Activated B cell treated with CpG ODN at 0.5 μM for 24 hours (primary cell): ENCODE measurements at regions of chr1 and their contacts with region 1.

Region 1: GRCh38 chr1:219173758-219174588 is at the start of gene LYPLAL1:
- DNase-seq: peak; percentile 91
- ATAC-seq: peak; percentile 86
- H3K4me3 Mint-ChIP-seq: peak within 1 kb of the TSS; percentile 98
- H3K27ac Mint-ChIP-seq: peak within 1 kb of the TSS; percentile 98
- H3K4me1 Mint-ChIP-seq: peaks cover 55% of the 10 kb centered on the region
- H3K27me3 Mint-ChIP-seq: no peaks in the 10 kb centered on the region
- CTCF ChIP-seq: no peak
- total RNA-seq, gene LYPLAL1: 38.0 and 42.3 TPM in 2 replicates

Region 2: DNA sequence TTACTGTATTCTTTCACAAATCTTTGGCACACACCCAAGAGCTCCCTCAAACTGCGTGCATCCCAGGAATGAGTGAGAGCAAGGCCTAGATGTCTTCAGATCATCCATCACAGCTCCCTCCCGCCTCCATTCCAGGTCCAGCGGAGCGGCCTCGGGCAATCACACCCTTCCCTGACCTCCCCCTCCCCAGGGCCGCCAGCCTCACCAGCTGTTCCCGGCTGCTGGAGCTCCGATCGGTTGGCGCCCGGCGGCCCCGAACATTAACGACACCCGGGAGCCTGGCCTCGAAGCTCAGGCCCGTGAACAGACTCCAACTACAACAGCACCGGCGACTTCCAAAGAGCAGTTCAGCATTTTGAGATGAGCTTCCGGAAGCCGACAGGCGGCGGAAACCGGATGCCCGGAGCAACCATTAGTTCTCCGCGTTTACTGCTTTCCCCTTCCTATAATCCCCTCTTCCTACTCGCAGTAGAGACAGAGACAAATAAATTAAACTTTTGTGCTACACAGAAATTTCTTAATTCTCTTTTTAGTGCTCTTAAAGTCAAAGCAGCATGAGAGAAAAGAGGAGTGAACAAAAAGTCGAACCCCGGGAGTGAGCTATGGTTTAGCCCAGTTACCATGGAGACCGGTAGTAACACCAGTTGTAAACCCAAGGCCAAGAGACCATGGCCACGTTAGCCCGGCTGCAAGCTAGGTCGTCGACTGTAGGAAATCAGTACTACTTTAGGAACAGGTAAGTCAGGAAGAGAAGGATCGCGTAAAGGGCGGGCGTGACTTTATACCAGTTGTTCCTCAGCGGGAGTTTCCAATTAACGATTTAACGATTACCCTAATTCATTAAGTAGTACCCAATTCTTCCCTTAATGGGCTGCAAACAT is 1543.0 kb before region 1 on chr1 and contains the starts of genes GPATCH2 and SPATA17:
- CTCF ChIA-PET with region 1: no interaction called
- POLR2A ChIA-PET with region 1: interaction called, 3 read pairs
- intact Hi-C with region 1: loop called (anchors 5 kb)
- DNase-seq: peak; percentile 59
- ATAC-seq: peak; percentile 89
- H3K4me3 Mint-ChIP-seq: peak within 1 kb of the TSS; percentile 97
- H3K27ac Mint-ChIP-seq: peak within 1 kb of the TSS; percentile 100
- H3K4me1 Mint-ChIP-seq: peaks cover 28% of the 10 kb centered on the region
- H3K27me3 Mint-ChIP-seq: peaks cover 15% of the 10 kb centered on the region
- CTCF ChIP-seq: no peak
- total RNA-seq, gene GPATCH2: 13.5 and 17.5 TPM in 2 replicates
- total RNA-seq, gene SPATA17: not detected in 2 replicates

Region 3: DNA sequence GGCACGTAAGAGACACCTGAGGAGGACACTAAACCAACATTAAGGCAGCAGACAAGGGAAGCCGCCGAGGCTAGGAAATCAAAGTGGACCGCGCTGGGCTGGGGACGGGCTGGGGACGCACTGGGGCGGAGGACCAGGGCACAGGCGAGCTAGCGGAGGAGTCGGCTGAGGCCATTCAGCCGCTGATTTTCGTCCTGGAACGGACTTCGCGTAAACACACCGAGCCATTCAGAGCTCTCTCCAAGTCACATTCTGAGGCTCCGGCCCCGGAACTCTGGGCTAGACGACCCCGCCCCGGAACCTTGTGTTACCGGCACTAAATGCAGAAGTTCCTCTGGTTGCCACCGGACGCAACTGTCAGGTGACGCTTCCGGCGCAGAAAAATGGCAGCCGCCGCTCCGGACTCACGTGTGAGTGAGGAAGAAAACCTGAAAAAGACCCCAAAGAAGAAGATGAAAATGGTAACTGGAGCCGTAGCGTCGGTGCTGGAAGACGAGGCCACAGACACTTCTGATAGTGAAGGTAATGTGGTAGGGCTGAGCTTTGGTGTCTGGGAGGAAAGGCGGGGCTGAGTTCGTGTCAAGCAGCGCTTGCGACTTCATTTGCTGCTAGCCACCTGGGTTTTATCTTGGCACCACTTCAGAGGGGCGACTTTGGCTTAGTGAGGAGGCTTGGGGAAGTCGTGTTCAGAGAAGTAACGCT is 888.9 kb before region 1 on chr1 and contains the start of gene RRP15:
- CTCF ChIA-PET with region 1: no interaction called
- POLR2A ChIA-PET with region 1: interaction called, 8 read pairs
- intact Hi-C with region 1: loop called (anchors 2 kb)
- DNase-seq: peak; percentile 85
- ATAC-seq: peak; percentile 99
- H3K4me3 Mint-ChIP-seq: peak within 1 kb of the TSS; percentile 96
- H3K27ac Mint-ChIP-seq: peak within 1 kb of the TSS; percentile 97
- H3K4me1 Mint-ChIP-seq: peaks cover 30% of the 10 kb centered on the region
- H3K27me3 Mint-ChIP-seq: peaks cover 9% of the 10 kb centered on the region
- CTCF ChIP-seq: no peak
- total RNA-seq, gene RRP15: 26.9 and 27.3 TPM in 2 replicates

Region 4: GRCh38 chr1:218510153-218510772 is 663.7 kb before region 1 on chr1:
- CTCF ChIA-PET with region 1: no interaction called
- POLR2A ChIA-PET with region 1: no interaction called
- intact Hi-C with region 1: no loop called
- DNase-seq: no peak
- ATAC-seq: no peak
- H3K4me3 Mint-ChIP-seq: no peak overlapping the region
- H3K27ac Mint-ChIP-seq: no peak overlapping the region
- H3K4me1 Mint-ChIP-seq: peaks cover 17% of the 10 kb centered on the region
- H3K27me3 Mint-ChIP-seq: no peaks in the 10 kb centered on the region
- CTCF ChIP-seq: no peak

Region 5: DNA sequence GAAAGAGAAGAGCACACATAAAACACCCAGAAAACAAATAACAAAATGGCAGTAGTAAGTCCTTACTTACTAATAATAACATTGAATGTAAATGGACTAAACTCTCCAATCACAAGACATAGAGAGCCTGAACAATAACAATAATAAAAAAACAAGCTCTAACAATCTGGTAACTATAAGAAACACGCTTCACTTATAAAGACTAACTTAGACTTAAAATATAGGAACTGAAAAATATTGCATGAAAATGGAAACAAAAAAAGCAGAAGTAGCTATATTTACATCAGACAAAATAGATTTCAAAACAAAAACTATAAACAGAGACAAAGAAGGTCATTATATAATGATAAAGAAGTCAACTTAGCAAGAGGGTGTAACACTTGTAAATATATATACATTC is 83.4 kb before region 1 on chr1:
- CTCF ChIA-PET with region 1: no interaction called
- POLR2A ChIA-PET with region 1: interaction called, 3 read pairs
- intact Hi-C with region 1: loop called (anchors 1 kb)
- DNase-seq: no peak
- ATAC-seq: peak; percentile 80
- H3K4me3 Mint-ChIP-seq: peak overlapping the region; percentile 70
- H3K27ac Mint-ChIP-seq: peak overlapping the region; percentile 85
- H3K4me1 Mint-ChIP-seq: peaks cover 47% of the 10 kb centered on the region
- H3K27me3 Mint-ChIP-seq: no peaks in the 10 kb centered on the region
- CTCF ChIP-seq: no peak

Region 6: GRCh38 chr1:219189021-219189824 is 15.2 kb after region 1 on chr1:
- CTCF ChIA-PET with region 1: interaction called, 37 read pairs
- POLR2A ChIA-PET with region 1: interaction called, 164 read pairs
- intact Hi-C with region 1: loop called (anchors 1 kb)
- DNase-seq: no peak
- ATAC-seq: peak; percentile 61
- H3K4me3 Mint-ChIP-seq: peak overlapping the region; percentile 74
- H3K27ac Mint-ChIP-seq: peak overlapping the region; percentile 91
- H3K4me1 Mint-ChIP-seq: peaks cover 61% of the 10 kb centered on the region
- H3K27me3 Mint-ChIP-seq: no peaks in the 10 kb centered on the region
- CTCF ChIP-seq: no peak